BJ (cell line): ENCODE measurements at regions of chr16 and their contacts with region 1.

Region 1: GRCh38 chr16:4637501-4638166 is 13.0 kb downstream of the MGRN1 start:
- DNase-seq: no peak
- H3K4me3 ChIP-seq: no peak overlapping the region
- H3K27me3 ChIP-seq: no peaks in the 10 kb centered on the region
- CTCF ChIP-seq: no peak

Region 2: DNA sequence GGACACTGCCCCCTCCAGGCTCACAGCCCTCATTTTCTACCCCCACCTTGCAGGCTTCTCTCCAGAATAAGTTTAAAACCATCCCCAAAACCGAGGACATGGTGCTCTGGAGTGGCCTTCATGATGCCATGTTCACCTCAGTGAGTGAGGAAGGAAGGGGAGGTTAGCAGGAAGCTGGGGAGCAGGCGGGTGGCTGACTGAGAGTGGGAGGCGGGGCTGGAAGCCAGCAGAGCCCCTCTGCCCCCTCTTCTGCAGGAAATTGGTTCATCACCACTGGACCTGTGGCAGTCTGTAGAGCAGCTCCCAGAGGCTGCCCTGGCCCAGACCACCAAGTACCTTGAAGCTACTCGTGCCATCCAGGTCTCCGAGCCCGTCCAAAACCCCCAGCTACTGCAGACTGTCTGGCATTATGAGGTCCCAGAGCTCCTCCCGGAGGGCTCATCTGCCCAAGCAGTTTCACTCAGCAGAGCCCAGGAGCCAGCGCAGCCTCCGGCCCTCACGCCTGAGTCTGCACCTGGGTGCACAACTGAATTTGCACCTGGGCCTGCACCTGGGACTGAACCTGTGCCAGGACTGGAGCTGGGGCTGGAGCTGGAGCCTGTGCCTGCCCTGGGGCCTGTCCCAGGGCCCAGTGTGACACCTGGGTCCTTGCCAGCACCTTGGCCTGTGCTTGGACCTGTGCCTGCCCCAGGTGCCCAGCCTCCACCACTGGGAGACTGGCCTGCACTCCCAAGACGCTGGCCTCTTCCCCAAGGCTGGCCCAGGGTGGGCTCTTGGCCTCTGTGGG is 62.5 kb before region 1 on chr16:
- CTCF ChIA-PET with region 1: no interaction called
- POLR2A ChIA-PET with region 1: no interaction called
- DNase-seq: no peak
- H3K4me3 ChIP-seq: no peak overlapping the region
- H3K27me3 ChIP-seq: no peaks in the 10 kb centered on the region; the same call in 1 of the 2 replicates
- CTCF ChIP-seq: no peak

Region 3: DNA sequence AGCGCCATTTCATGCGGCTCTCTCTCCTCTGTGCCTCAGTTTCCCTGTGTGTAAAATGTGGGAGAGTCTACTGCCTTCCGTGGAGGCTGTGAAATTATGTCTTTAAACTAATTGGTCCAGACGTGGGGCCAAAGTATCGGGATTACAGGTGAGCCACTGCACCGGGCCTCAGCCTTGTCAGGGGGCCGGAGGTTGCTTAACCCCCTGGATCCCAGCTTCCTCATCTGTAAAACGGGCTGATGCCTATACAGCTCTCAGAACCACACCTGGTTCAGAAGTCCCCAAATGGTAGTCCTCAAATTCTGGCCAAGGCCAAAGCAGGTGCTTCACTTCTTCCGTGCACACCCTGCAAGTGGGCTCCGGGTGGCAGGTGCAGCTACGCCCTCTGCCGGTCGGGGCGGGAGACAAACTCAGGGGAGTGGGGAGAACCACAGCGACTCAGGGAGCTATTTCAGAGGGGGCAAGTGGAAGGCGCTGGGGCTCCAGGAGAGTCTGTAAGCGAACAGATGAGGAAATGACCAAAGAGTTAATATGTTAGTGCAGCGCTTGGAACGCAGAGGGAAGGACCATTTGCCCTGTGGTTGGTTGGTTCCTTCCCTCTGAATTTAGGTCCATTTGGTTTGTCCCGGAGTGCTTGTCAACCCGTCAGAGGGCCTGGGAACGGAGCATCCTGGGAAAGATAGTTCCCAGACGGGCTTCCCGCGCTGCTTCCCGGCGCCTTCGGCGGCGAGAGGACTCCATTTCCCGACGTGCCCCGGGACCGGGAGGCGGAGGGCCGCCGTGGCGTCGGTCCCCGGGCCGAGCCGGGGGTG is 13.4 kb before region 1 on chr16 and contains the start of gene MGRN1:
- CTCF ChIA-PET with region 1: interaction called, 14 read pairs
- POLR2A ChIA-PET with region 1: no interaction called
- DNase-seq: peak; percentile 91
- H3K4me3 ChIP-seq: peak within 1 kb of the TSS; percentile 98
- H3K27me3 ChIP-seq: no peaks in the 10 kb centered on the region
- CTCF ChIP-seq: peak; percentile 99
- polyA plus RNA-seq, gene MGRN1: 2.9 and 4.5 TPM in 2 replicates

Region 4: DNA sequence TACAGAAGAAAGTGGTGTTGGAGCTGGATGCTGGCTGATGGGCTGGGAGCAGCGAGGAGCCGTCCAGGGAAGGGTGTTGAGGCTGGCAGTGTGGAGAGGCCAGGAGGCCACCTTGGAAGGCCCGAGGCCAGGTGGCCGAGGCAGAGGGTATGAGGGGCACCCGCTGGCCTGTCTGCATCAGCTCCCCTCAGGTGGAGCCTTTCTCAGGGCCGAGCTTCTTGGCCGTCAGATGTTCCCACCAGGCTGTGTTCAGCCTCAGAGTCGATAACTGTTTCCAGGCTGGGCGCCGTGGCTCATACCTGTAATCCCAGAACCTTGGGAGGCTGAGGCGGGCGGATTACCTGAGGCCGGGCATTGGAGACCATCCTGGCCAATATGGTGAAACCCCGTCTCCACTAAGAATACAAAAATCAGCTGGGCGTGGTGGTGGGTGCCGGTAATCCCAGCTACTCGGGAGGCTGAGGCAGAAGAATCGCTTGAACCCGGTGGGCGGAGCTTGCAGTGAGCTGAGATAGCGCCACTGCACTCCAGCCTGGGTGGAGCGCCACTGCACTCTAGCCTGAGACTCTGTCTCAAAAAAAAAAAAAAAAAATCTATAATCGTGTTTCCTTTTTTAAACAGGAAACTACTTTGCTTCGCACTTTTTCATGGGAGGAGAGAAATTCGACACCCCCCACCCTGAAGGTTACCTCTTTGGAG is 12.3 kb after region 1 on chr16:
- CTCF ChIA-PET with region 1: interaction called, 15 read pairs
- POLR2A ChIA-PET with region 1: no interaction called
- DNase-seq: no peak
- H3K4me3 ChIP-seq: no peak overlapping the region
- H3K27me3 ChIP-seq: no peaks in the 10 kb centered on the region
- CTCF ChIP-seq: no peak

Region 5: DNA sequence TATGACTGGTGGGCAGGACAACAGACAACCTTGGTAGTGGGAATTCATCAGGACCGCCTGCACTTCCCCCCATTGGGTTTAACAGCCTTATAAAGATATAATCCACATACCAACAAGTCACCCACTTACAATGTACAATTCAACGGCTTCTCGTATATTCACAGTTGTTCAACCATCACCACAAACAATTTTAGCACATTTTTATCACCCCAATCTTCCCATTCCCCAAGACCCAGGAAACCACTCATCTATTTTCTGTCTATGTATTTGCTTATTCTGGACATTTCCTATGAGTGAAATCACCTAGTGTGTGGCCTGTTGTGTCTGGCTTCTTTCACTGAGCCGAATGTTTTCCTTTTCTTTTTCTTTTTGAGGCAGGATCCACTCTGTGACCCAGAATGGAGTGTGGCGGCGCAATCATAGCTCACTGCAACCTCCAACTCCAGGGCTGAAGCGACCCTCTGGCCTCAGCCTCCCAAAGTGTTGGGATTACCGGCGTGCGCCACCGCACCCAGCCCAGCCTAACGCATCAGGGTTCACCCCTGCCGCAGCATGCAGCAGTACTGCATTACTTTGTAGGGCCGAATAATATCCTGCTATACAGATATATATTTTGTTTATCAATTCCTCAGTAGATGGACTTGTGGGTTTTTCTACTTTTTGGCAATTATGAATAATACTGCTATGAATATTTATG is 85.6 kb after region 1 on chr16:
- CTCF ChIA-PET with region 1: no interaction called
- POLR2A ChIA-PET with region 1: no interaction called
- DNase-seq: no peak
- H3K4me3 ChIP-seq: no peak overlapping the region
- H3K27me3 ChIP-seq: no peaks in the 10 kb centered on the region
- CTCF ChIP-seq: no peak